Pancreas (tissue), 10 donors: ENCODE measurements at regions of chr11 and their contacts with region 1.

Region 1: GRCh38 chr11:82146789-82147188 is 586.9 kb downstream of the FAM181B start:
- DNase-seq: no peak
- ATAC-seq: no peak
- H3K4me3 ChIP-seq: no peak overlapping the region
- H3K27ac ChIP-seq: no peak overlapping the region
- H3K4me1 ChIP-seq: no peaks in the 10 kb centered on the region
- H3K27me3 ChIP-seq: peaks cover 0 to 3% (median 0%) of the 10 kb centered on the region in 4 donors
- CTCF ChIP-seq: no peak

Region 2: GRCh38 chr11:82676473-82677094 is 529.8 kb after region 1 on chr11:
- intact Hi-C with region 1: loop called in 1 of 3 experiments (anchors 10 kb)
- DNase-seq: no peak
- ATAC-seq: no peak
- H3K4me3 ChIP-seq: no peak overlapping the region
- H3K27ac ChIP-seq: no peak overlapping the region
- H3K4me1 ChIP-seq: no peaks in the 10 kb centered on the region
- H3K27me3 ChIP-seq: no peaks in the 10 kb centered on the region
- CTCF ChIP-seq: peak in 3 of 4 donors; percentile 15 to 20 (median 20)